T-cell (primary cell): ENCODE measurements at regions of chr4 and their contacts with region 1.

Region 1: GRCh38 chr4:158295053-158295452 is 84.8 kb downstream of the TMEM144 start:
- DNase-seq: no peak
- ATAC-seq: no peak
- H3K4me3 ChIP-seq: no peak overlapping the region
- H3K4me3 Mint-ChIP-seq: no peak overlapping the region
- H3K27ac ChIP-seq: no peak overlapping the region
- H3K27ac Mint-ChIP-seq: no peak overlapping the region
- H3K4me1 ChIP-seq: no peaks in the 10 kb centered on the region
- H3K4me1 Mint-ChIP-seq: no peaks in the 10 kb centered on the region
- H3K27me3 ChIP-seq: peaks cover 0 to 4% of the 10 kb centered on the region in 2 experiments
- H3K27me3 Mint-ChIP-seq: peaks cover 2 to 8% of the 10 kb centered on the region in 2 donors

Region 2: DNA sequence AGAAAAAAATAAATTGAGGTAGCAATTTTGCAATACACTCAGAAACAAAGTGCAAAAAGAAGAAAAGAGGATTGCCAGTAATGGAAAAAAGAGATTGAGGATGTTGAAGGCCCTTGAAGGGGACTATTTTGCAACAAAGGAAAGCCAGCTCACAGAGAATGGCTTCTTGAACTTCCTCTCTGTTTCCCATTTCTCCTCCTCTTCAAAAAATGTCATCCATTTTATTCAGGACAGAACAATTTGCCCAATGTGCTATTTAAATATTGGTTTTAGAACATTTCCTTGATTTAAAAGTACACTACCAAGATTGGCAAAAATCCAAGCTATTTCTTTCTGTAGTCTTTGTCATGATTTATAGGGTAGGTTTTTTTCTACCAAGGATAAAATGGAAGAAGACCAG is 182.4 kb before region 1 on chr4:
- CTCF ChIA-PET with region 1: no interaction called
- POLR2A ChIA-PET with region 1: interaction called in 1 of 2 experiments, 10 read pairs
- DNase-seq: no peak
- ATAC-seq: no peak
- H3K4me3 ChIP-seq: no peak overlapping the region
- H3K4me3 Mint-ChIP-seq: no peak overlapping the region
- H3K27ac ChIP-seq: no peak overlapping the region
- H3K27ac Mint-ChIP-seq: no peak overlapping the region
- H3K4me1 ChIP-seq: no peaks in the 10 kb centered on the region
- H3K4me1 Mint-ChIP-seq: no peaks in the 10 kb centered on the region
- H3K27me3 ChIP-seq: no peaks in the 10 kb centered on the region
- H3K27me3 Mint-ChIP-seq: peaks cover 0 to 5% of the 10 kb centered on the region in 2 donors

Region 3: GRCh38 chr4:158282252-158282651 is 12.8 kb before region 1 on chr4:
- CTCF ChIA-PET with region 1: no interaction called
- POLR2A ChIA-PET with region 1: no interaction called
- DNase-seq: no peak
- ATAC-seq: no peak
- H3K4me3 ChIP-seq: no peak overlapping the region
- H3K4me3 Mint-ChIP-seq: no peak overlapping the region
- H3K27ac ChIP-seq: no peak overlapping the region
- H3K27ac Mint-ChIP-seq: no peak overlapping the region
- H3K4me1 ChIP-seq: no peaks in the 10 kb centered on the region
- H3K4me1 Mint-ChIP-seq: no peaks in the 10 kb centered on the region
- H3K27me3 ChIP-seq: no peaks in the 10 kb centered on the region
- H3K27me3 Mint-ChIP-seq: peaks cover 0 to 10% of the 10 kb centered on the region in 2 donors

Region 4: GRCh38 chr4:158356301-158356700 is 61.2 kb after region 1 on chr4:
- CTCF ChIA-PET with region 1: no interaction called
- POLR2A ChIA-PET with region 1: no interaction called
- DNase-seq: no peak
- ATAC-seq: no peak
- H3K4me3 ChIP-seq: no peak overlapping the region
- H3K4me3 Mint-ChIP-seq: no peak overlapping the region
- H3K27ac ChIP-seq: no peak overlapping the region
- H3K27ac Mint-ChIP-seq: no peak overlapping the region
- H3K4me1 ChIP-seq: no peaks in the 10 kb centered on the region
- H3K4me1 Mint-ChIP-seq: no peaks in the 10 kb centered on the region
- H3K27me3 ChIP-seq: no peaks in the 10 kb centered on the region
- H3K27me3 Mint-ChIP-seq: peaks cover 0 to 4% of the 10 kb centered on the region in 2 donors